Mammary epithelial cell (primary cell): ENCODE measurements at regions of chr13 and their contacts with region 1.

Region 1: GRCh38 chr13:79631051-79631659 is 150.2 kb downstream of the NDFIP2 start:
- DNase-seq: peak; percentile 97
- H3K4me3 ChIP-seq: no peak overlapping the region
- H3K27ac ChIP-seq: peak overlapping the region; percentile 62
- H3K4me1 ChIP-seq: peaks cover 36% of the 10 kb centered on the region
- H3K27me3 ChIP-seq: no peaks in the 10 kb centered on the region
- CTCF ChIP-seq: peak; percentile 40 to 66

Region 2: GRCh38 chr13:79328510-79328909 is 302.6 kb before region 1 on chr13:
- CTCF ChIA-PET with region 1: no interaction called
- dilution Hi-C with region 1: no loop called
- in situ Hi-C with region 1: no loop called
- intact Hi-C with region 1: no loop called
- DNase-seq: no peak
- H3K4me3 ChIP-seq: no peak overlapping the region
- H3K27ac ChIP-seq: no peak overlapping the region
- H3K4me1 ChIP-seq: no peaks in the 10 kb centered on the region
- H3K27me3 ChIP-seq: no peaks in the 10 kb centered on the region
- CTCF ChIP-seq: no peak

Region 3: DNA sequence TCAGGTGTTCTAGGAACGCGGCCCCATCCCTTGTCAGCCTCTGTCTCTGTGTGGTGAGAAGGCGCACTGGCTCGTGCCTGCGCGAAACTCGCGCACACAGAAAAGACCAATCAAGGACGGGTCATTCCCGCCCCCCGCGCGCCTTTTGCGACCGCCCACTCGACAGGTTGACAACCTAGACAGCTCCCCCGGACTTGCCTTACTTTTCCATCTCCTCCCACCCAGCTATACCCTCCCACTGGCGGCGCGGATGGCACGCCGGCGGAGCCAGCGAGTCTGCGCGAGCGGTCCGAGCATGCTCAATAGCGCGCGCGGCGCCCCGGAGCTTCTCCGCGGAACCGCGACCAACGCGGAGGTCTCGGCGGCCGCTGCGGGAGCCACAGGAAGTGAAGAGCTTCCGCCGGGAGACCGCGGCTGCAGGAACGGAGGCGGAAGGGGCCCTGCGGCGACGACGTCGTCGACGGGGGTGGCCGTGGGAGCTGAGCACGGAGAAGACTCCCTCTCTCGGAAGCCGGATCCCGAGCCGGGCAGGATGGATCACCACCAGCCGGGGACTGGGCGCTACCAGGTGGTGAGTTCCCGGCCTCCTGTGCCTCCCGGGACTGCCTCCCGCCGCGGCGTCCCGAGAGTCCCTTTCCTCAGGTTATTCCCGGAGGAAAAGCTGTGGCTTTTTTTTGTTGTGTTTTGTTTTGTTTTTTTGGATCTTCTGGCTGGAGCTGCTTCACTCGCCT is 150.0 kb before region 1 on chr13 and contains the start of gene NDFIP2:
- CTCF ChIA-PET with region 1: no interaction called
- dilution Hi-C with region 1: no loop called
- in situ Hi-C with region 1: no loop called
- intact Hi-C with region 1: loop called (anchors 5 kb)
- DNase-seq: peak; percentile 89
- H3K4me3 ChIP-seq: peak within 1 kb of the TSS; percentile 92 to 100 (median 98)
- H3K27ac ChIP-seq: peak within 1 kb of the TSS; percentile 100
- H3K4me1 ChIP-seq: peaks cover 33% of the 10 kb centered on the region
- H3K27me3 ChIP-seq: no peaks in the 10 kb centered on the region
- CTCF ChIP-seq: peak in 1 of 2 donors; percentile 1
- total RNA-seq, gene NDFIP2: 120 TPM

Region 4: DNA sequence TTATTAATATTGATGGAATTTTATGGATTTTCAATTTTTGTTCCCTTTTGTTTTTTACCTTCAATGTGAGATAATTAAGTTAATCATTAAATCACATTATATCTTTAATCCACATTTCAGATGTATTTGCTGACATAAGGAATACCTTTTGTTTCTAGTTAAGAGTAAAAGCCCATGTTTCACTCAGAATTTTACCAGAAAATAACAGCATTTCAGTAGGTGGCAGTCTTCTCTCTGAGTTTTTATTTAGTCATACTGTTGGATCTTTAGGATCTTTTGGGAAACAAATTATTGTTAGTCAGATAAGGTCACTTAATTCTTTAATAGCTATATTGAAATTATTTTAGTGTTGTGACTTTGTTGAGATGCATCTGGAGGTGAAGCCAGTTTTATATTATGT is 82.3 kb before region 1 on chr13:
- CTCF ChIA-PET with region 1: no interaction called
- dilution Hi-C with region 1: no loop called
- in situ Hi-C with region 1: no loop called
- intact Hi-C with region 1: loop called (anchors 2 kb)
- DNase-seq: peak; percentile 23
- H3K4me3 ChIP-seq: no peak overlapping the region
- H3K27ac ChIP-seq: peak overlapping the region; percentile 3
- H3K4me1 ChIP-seq: peaks cover 5% of the 10 kb centered on the region
- H3K27me3 ChIP-seq: no peaks in the 10 kb centered on the region
- CTCF ChIP-seq: peak; percentile 48 to 55

Region 5: DNA sequence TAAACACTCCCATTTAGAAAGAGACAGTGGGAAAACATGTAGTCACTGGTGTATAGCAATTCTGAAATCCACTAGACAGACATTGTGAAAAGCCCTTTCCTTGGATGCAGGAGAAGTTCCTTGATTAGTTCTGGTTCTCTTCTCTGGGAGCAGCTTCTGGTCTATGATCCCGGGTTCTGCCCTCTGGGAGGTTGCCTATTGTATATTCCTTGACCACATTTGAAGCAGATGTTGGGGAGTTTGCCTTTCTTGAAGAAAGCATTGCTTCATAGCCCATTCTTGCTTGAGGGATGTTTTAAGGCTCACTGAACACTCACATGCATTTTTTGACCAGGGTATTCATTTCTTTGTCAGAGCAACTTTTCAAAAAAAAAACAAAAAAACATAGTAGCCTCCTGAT is 61.7 kb after region 1 on chr13:
- CTCF ChIA-PET with region 1: no interaction called
- dilution Hi-C with region 1: no loop called
- in situ Hi-C with region 1: no loop called
- intact Hi-C with region 1: no loop called
- DNase-seq: no peak
- H3K4me3 ChIP-seq: no peak overlapping the region
- H3K27ac ChIP-seq: no peak overlapping the region
- H3K4me1 ChIP-seq: no peaks in the 10 kb centered on the region
- H3K27me3 ChIP-seq: no peaks in the 10 kb centered on the region
- CTCF ChIP-seq: no peak

Region 6: DNA sequence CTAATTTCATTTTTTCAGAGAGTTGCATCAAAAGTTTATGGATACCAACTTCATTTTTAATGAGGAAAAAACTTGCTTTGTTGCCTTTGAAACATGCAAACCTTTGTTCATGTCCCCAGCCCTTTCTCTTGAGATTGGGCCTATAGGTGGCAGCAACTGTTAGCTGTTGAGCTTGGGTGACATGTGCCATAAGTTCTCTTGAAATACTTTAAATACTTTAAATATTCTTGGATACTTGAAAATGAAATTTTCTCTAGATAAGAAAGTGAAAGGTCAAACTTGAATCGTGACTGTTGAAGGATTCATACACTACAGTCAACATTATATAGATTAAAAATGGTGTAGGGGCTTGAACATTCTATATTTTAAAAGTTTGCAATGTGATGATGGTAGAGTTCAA is 144.7 kb after region 1 on chr13:
- CTCF ChIA-PET with region 1: no interaction called
- dilution Hi-C with region 1: no loop called
- in situ Hi-C with region 1: no loop called
- intact Hi-C with region 1: loop called (anchors 2 kb)
- DNase-seq: peak; percentile 46
- H3K4me3 ChIP-seq: no peak overlapping the region
- H3K27ac ChIP-seq: no peak overlapping the region
- H3K4me1 ChIP-seq: peaks cover 29% of the 10 kb centered on the region
- H3K27me3 ChIP-seq: no peaks in the 10 kb centered on the region
- CTCF ChIP-seq: peak; percentile 53 to 76

Region 7: GRCh38 chr13:79936368-79937136 is 305.4 kb after region 1 on chr13:
- CTCF ChIA-PET with region 1: no interaction called
- dilution Hi-C with region 1: no loop called
- in situ Hi-C with region 1: no loop called
- intact Hi-C with region 1: loop called (anchors 5 kb)
- DNase-seq: peak; percentile 98
- H3K4me3 ChIP-seq: no peak overlapping the region
- H3K27ac ChIP-seq: peak overlapping the region; percentile 89
- H3K4me1 ChIP-seq: peaks cover 40% of the 10 kb centered on the region
- H3K27me3 ChIP-seq: no peaks in the 10 kb centered on the region
- CTCF ChIP-seq: no peak

Region 8: GRCh38 chr13:79988573-79988972 is 357.4 kb after region 1 on chr13:
- CTCF ChIA-PET with region 1: no interaction called
- dilution Hi-C with region 1: no loop called
- in situ Hi-C with region 1: no loop called
- intact Hi-C with region 1: loop called (anchors 5 kb)
- DNase-seq: peak; percentile 74
- H3K4me3 ChIP-seq: no peak overlapping the region
- H3K27ac ChIP-seq: peak overlapping the region; percentile 99
- H3K4me1 ChIP-seq: peaks cover 49% of the 10 kb centered on the region
- H3K27me3 ChIP-seq: no peaks in the 10 kb centered on the region
- CTCF ChIP-seq: no peak

Region 9: GRCh38 chr13:80065996-80066395 is 434.8 kb after region 1 on chr13:
- CTCF ChIA-PET with region 1: no interaction called
- dilution Hi-C with region 1: no loop called
- in situ Hi-C with region 1: no loop called
- intact Hi-C with region 1: no loop called
- DNase-seq: no peak
- H3K4me3 ChIP-seq: no peak overlapping the region
- H3K27ac ChIP-seq: no peak overlapping the region
- H3K4me1 ChIP-seq: peaks cover 3% of the 10 kb centered on the region
- H3K27me3 ChIP-seq: no peaks in the 10 kb centered on the region
- CTCF ChIP-seq: no peak

Region 10: GRCh38 chr13:80363890-80364503 is 732.8 kb after region 1 on chr13:
- CTCF ChIA-PET with region 1: no interaction called
- dilution Hi-C with region 1: no loop called
- in situ Hi-C with region 1: no loop called
- intact Hi-C with region 1: loop called (anchors 1 kb)
- DNase-seq: peak; percentile 5
- H3K4me3 ChIP-seq: peak overlapping the region in 1 of 3 experiments; percentile 41
- H3K27ac ChIP-seq: peak overlapping the region; percentile 27
- H3K4me1 ChIP-seq: peaks cover 10% of the 10 kb centered on the region
- H3K27me3 ChIP-seq: no peaks in the 10 kb centered on the region
- CTCF ChIP-seq: peak; percentile 69 to 81

Region 11: DNA sequence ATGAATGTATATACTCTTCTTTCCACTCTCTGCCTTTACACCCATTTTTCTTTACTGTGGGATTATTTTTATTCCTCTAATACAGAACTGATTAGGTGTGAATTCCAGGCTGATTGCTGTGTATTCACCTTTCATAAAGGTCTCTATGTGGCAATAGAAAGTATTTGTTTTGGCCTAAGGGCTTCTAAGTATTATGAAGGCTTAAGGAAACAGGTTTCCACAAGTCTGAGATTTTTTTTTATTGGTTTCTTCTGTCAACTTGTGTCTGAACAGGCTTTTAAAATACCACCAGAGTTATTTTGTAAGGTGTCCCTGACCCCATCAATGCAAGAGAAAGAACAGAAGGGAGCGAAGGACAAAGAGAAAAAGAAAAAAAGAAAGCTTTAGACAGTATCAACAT is 1811.7 kb after region 1 on chr13:
- CTCF ChIA-PET with region 1: no interaction called
- dilution Hi-C with region 1: no loop called
- in situ Hi-C with region 1: no loop called
- intact Hi-C with region 1: no loop called
- DNase-seq: peak; percentile 73
- H3K4me3 ChIP-seq: no peak overlapping the region
- H3K27ac ChIP-seq: peak overlapping the region; percentile 35
- H3K4me1 ChIP-seq: peaks cover 30% of the 10 kb centered on the region
- H3K27me3 ChIP-seq: no peaks in the 10 kb centered on the region
- CTCF ChIP-seq: no peak